ENCODE measurements at regions of chr2 and their contacts with region 1.

Region 1: DNA sequence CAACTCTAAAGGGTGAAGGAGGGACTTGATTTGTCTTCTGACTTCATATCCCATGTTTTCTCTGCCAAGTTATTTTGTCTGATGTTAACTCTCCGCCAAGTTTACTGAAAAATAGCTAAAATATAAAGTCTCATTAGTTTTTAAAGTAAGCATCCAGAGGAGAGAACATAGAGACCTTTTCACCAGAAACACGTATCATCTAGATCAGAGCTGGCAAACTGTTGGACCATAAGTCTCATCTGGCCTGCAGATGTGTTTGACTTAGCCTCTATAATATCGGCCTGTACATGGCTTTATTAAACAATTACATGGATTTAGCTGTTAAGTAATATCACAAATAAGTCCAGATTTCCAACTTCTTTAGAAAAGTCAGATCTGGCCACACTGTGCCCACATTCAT is 182.6 kb downstream of the PLCL1 start:
- DNase-seq: no peak
- ATAC-seq: no peak
- H3K4me3 ChIP-seq: no peak overlapping the region
- H3K4me3 Mint-ChIP-seq: no peak overlapping the region
- H3K27ac ChIP-seq: no peak overlapping the region
- H3K27ac Mint-ChIP-seq: no peak overlapping the region
- H3K4me1 ChIP-seq: no peaks in the 10 kb centered on the region
- H3K4me1 Mint-ChIP-seq: peaks cover 37% of the 10 kb centered on the region
- H3K27me3 ChIP-seq: no peaks in the 10 kb centered on the region
- H3K27me3 Mint-ChIP-seq: no peaks in the 10 kb centered on the region
- CTCF ChIP-seq: no peak

Region 2: DNA sequence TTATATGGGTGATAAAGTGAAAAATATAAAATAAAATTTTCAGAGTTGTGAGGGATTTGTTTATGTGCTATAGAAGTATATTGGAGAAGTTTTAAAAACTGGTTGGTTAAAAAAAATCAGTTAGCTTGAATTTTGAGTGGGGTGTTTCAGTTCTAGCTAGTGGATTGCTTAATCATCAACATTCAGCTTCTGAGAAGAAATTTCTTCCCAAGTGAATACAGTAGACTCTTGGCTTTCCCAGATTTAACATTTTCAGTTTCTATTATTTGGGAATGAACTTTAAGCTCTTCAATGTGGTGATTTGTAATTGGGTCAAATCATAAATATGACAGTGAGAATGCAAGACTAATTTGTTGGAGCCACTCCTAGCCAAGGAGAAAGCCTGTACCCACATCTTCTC is 61.8 kb before region 1 on chr2:
- CTCF ChIA-PET with region 1: no interaction called
- POLR2A ChIA-PET with region 1: no interaction called
- intact Hi-C with region 1: no loop called
- DNase-seq: no peak
- ATAC-seq: no peak
- H3K4me3 ChIP-seq: no peak overlapping the region
- H3K4me3 Mint-ChIP-seq: no peak overlapping the region
- H3K27ac ChIP-seq: no peak overlapping the region
- H3K27ac Mint-ChIP-seq: no peak overlapping the region
- H3K4me1 ChIP-seq: no peaks in the 10 kb centered on the region
- H3K4me1 Mint-ChIP-seq: peaks cover 37% of the 10 kb centered on the region
- H3K27me3 ChIP-seq: no peaks in the 10 kb centered on the region
- H3K27me3 Mint-ChIP-seq: no peaks in the 10 kb centered on the region
- CTCF ChIP-seq: no peak

Region 3: DNA sequence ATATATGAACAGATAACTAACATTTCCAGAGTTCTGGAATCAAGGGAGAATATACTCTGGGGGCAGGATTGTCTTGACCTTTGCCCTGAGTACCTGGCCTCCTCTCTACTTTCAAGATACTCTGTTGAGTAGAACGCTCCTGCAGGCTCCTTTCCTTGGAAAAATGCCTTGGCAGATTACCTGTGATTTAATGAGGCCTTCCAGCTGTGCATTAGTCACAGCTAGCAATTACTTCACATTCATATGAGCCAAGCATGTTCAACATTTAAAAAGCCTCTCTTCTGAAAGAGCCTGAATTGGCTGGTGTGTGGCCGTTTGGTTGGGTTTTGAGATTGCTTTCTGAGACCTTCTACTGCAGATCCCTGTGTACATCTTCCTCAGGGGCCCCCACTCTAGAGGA is 40.4 kb before region 1 on chr2:
- CTCF ChIA-PET with region 1: no interaction called
- POLR2A ChIA-PET with region 1: no interaction called
- intact Hi-C with region 1: loop called in 1 of 2 experiments (anchors 5 kb)
- DNase-seq: no peak
- ATAC-seq: no peak
- H3K4me3 ChIP-seq: no peak overlapping the region
- H3K4me3 Mint-ChIP-seq: no peak overlapping the region
- H3K27ac ChIP-seq: no peak overlapping the region
- H3K27ac Mint-ChIP-seq: no peak overlapping the region
- H3K4me1 ChIP-seq: peaks cover 10% of the 10 kb centered on the region
- H3K4me1 Mint-ChIP-seq: peaks cover 90% of the 10 kb centered on the region
- H3K27me3 ChIP-seq: no peaks in the 10 kb centered on the region
- H3K27me3 Mint-ChIP-seq: no peaks in the 10 kb centered on the region
- CTCF ChIP-seq: no peak

Measured in CD4-positive, alpha-beta T cell (primary cell).